Activated CD4-positive, alpha-beta T cell treated with anti-CD3 and anti-CD28 coated beads for 36 hours (primary cell): ENCODE measurements at regions of chr1 and their contacts with region 1.

Region 1: GRCh38 chr1:118429856-118430255 is 244.8 kb upstream of the SPAG17 start:
- DNase-seq: no peak
- ATAC-seq: no peak
- H3K4me3 Mint-ChIP-seq: no peak overlapping the region
- H3K27ac Mint-ChIP-seq: no peak overlapping the region
- H3K4me1 Mint-ChIP-seq: no peaks in the 10 kb centered on the region
- H3K27me3 Mint-ChIP-seq: no peaks in the 10 kb centered on the region

Region 2: GRCh38 chr1:118445156-118445555 is 15.3 kb after region 1 on chr1:
- CTCF ChIA-PET with region 1: no interaction called
- POLR2A ChIA-PET with region 1: interaction called, 12 read pairs
- intact Hi-C with region 1: no loop called
- DNase-seq: no peak
- ATAC-seq: no peak
- H3K4me3 Mint-ChIP-seq: no peak overlapping the region
- H3K27ac Mint-ChIP-seq: no peak overlapping the region
- H3K4me1 Mint-ChIP-seq: no peaks in the 10 kb centered on the region
- H3K27me3 Mint-ChIP-seq: no peaks in the 10 kb centered on the region

Region 3: GRCh38 chr1:118751166-118751565 is 321.3 kb after region 1 on chr1:
- CTCF ChIA-PET with region 1: no interaction called
- POLR2A ChIA-PET with region 1: no interaction called
- intact Hi-C with region 1: no loop called
- DNase-seq: no peak
- ATAC-seq: no peak
- H3K4me3 Mint-ChIP-seq: no peak overlapping the region
- H3K27ac Mint-ChIP-seq: no peak overlapping the region
- H3K4me1 Mint-ChIP-seq: no peaks in the 10 kb centered on the region
- H3K27me3 Mint-ChIP-seq: no peaks in the 10 kb centered on the region